Head of caudate nucleus (tissue), 42 donors: ENCODE measurements at regions of chr2 and their contacts with region 1.

Region 1: GRCh38 chr2:174603280-174603679 is 5.7 kb upstream of the WIPF1 start:
- DNase-seq: peak in 39 of 42 donors; percentile 21 to 88 (median 70)

Region 2: GRCh38 chr2:174682578-174683391 is 79.5 kb after region 1 on chr2:
- intact Hi-C with region 1: loop called (anchors 10 kb)
- DNase-seq: peak; percentile 39 to 89 (median 78)

Region 3: GRCh38 chr2:175778161-175778560 is 1174.9 kb after region 1 on chr2:
- intact Hi-C with region 1: no loop called
- DNase-seq: no peak